Ovary (tissue), 10 donors: ENCODE measurements at regions of chr17 and their contacts with region 1.

Region 1: GRCh38 chr17:19362277-19363113 is at the start of gene B9D1:
- DNase-seq: peak; percentile 96 to 98 (median 98)
- H3K4me3 ChIP-seq: peak within 1 kb of the TSS; percentile 84
- H3K27ac ChIP-seq: peak within 1 kb of the TSS; percentile 57 to 90
- H3K4me1 ChIP-seq: peaks cover 2% of the 10 kb centered on the region
- H3K27me3 ChIP-seq: no peaks in the 10 kb centered on the region
- CTCF ChIP-seq: peak; percentile 100
- EP300 ChIP-seq: no peak
- POLR2A ChIP-seq: peak; percentile 29
- total RNA-seq, gene B9D1: 19.6 to 60.5 (median 26.9) TPM

Region 2: GRCh38 chr17:19447085-19447583 is 84.6 kb after region 1 on chr17:
- intact Hi-C with region 1: loop called (anchors 2 to 5 kb)
- DNase-seq: peak; percentile 56 to 86 (median 70)
- H3K4me3 ChIP-seq: no peak overlapping the region
- H3K27ac ChIP-seq: peak overlapping the region; percentile 34 to 41
- H3K4me1 ChIP-seq: peaks cover 15% of the 10 kb centered on the region
- H3K27me3 ChIP-seq: no peaks in the 10 kb centered on the region
- CTCF ChIP-seq: peak; percentile 65 to 97 (median 94)
- EP300 ChIP-seq: no peak
- POLR2A ChIP-seq: no peak

Region 3: DNA sequence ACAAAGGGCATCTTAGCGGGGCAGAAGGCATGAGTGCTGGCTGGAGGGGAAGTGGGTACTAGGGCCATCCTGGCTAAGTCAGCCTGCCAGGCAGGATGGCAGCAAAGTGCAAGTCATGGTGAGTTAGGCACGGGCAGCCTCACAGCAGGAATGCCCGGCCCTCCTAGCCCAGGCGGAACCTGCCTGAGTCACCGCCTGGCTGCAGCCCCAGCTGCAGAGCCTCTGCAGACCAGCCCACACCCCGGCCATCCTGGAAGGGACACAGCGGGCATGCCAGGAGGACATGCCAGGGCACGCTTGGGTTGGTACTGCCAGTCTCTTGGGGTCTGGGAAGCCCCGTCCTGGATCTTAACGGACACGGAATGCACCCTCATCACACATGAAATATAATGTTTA is 390.6 kb after region 1 on chr17:
- intact Hi-C with region 1: loop called in 1 of 4 experiments (anchors 10 kb)
- DNase-seq: peak in 1 of 5 donors; percentile 38
- H3K4me3 ChIP-seq: no peak overlapping the region
- H3K27ac ChIP-seq: no peak overlapping the region
- H3K4me1 ChIP-seq: no peaks in the 10 kb centered on the region
- H3K27me3 ChIP-seq: no peaks in the 10 kb centered on the region
- CTCF ChIP-seq: no peak
- EP300 ChIP-seq: no peak
- POLR2A ChIP-seq: no peak

Region 4: DNA sequence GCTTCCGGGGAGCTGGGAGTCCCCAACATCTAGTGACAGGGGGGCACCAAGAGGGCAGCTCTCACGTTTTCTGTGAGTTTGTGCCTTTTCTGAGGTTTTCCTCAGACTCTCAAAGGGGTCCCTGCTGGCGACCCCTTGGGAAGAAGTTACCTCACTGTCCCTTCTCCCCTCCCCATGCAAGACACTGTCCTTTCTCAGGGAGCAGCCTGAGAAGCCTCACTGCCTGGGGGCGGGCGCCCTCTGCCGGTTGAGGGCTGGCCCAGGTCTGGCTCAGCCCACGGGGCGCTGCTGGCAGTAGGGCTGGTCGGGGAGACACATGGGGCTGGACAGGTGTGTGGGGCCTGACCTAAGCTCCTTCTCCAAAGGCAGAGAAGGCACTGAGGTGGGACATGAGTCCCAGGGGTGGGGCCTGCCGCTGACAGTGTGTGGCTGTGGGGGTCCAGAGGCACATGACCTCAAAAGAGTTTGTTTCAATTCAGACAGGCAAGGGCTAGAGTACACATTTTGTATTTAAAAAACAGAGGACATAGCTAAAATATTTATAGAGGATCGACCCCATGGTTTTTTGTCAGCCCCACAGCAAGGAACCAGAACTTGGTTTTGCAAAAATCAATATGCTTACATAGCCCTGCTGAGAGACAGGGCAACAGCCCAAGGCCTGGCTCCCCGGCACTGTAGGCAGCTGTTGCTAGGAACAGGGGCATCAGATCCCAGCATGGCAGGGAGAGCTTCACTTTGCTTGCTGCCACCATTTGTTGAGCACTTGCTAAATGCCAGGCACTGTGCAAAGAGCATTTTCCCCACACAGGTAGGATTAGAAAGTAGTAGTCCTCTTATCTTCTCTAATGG is 404.2 kb after region 1 on chr17:
- intact Hi-C with region 1: loop called in 3 of 4 experiments (anchors 1 to 10 kb)
- DNase-seq: peak; percentile 73 to 90 (median 87)
- H3K4me3 ChIP-seq: no peak overlapping the region
- H3K27ac ChIP-seq: no peak overlapping the region
- H3K4me1 ChIP-seq: peaks cover 2% of the 10 kb centered on the region
- H3K27me3 ChIP-seq: no peaks in the 10 kb centered on the region
- CTCF ChIP-seq: peak; percentile 95 to 96 (median 95)
- EP300 ChIP-seq: no peak
- POLR2A ChIP-seq: peak; percentile 28